ENCODE measurements at regions of chr7 and their contacts with region 1.

Region 1: GRCh38 chr7:73828107-73828803 is 2.5 kb upstream of the CLDN4 start:
- DNase-seq: peak; percentile 92 to 99
- H3K4me3 ChIP-seq: peak overlapping the region; percentile 58; the same call in 1 of the 2 replicates
- H3K27ac ChIP-seq: peak overlapping the region; percentile 99
- H3K4me1 ChIP-seq: peaks cover 69% of the 10 kb centered on the region
- H3K27me3 ChIP-seq: no peaks in the 10 kb centered on the region
- CTCF ChIP-seq: no peak

Region 2: GRCh38 chr7:73585196-73585595 is 243.1 kb before region 1 on chr7:
- CTCF ChIA-PET with region 1: no interaction called
- POLR2A ChIA-PET with region 1: no interaction called
- intact Hi-C with region 1: loop called (anchors 10 kb)
- DNase-seq: no peak
- H3K4me3 ChIP-seq: no peak overlapping the region
- H3K27ac ChIP-seq: no peak overlapping the region
- H3K4me1 ChIP-seq: peaks cover 22% of the 10 kb centered on the region
- H3K27me3 ChIP-seq: no peaks in the 10 kb centered on the region
- CTCF ChIP-seq: no peak

Region 3: DNA sequence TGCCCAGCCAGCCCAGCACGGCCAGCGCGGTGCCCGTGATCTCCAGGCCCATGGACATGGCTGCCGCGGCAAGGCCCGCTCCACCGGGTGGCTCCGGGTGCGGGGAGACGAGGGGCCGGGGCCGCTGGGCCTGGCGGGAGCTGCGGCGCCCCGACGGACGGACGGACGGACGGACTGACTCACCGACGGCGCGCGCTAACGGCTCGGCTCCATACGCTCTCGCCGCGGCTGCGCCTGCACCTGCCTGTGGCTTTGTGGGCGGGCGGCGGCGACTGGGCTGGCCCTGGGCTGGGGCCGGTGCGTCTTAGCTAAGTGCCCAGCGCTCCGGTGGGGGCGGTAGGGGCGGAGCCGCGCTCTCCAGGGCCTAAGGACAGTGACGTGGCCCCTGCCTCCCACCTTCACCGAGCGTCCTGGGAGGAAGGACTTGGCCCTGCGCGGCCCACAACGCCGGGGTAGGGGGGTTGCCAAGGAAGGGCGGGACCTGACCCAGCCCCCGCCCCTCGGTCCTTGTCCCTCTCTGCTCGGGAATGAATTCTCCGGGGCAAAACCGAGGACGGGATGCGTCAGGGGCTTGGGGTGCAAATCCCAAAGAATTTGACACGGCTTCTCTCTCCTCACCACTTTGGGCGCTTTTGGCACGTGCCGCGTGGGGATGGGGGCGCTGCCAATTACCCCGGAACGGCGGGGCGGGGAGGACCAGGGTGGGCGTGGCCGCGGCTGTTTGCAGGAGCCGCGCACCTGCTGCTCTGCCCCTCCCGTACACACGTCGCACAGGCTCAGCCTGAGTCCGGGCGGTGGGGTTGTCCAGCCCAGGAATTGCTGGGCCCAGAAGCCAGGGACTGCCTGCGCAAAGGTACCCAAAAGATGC is 58.0 kb before region 1 on chr7 and contains the start of gene CLDN3:
- CTCF ChIA-PET with region 1: no interaction called
- POLR2A ChIA-PET with region 1: interaction called, 15 read pairs
- intact Hi-C with region 1: loop called (anchors 1 kb)
- DNase-seq: peak; percentile 83 to 97
- H3K4me3 ChIP-seq: peak within 1 kb of the TSS; percentile 66; the same call in 1 of the 2 replicates
- H3K27ac ChIP-seq: peak within 1 kb of the TSS; percentile 58
- H3K4me1 ChIP-seq: peaks cover 23% of the 10 kb centered on the region
- H3K27me3 ChIP-seq: no peaks in the 10 kb centered on the region
- CTCF ChIP-seq: no peak
- total RNA-seq, gene CLDN3: 31.3 and 45.2 TPM in 2 replicates

Region 4: GRCh38 chr7:73811760-73812168 is 16.5 kb before region 1 on chr7:
- CTCF ChIA-PET with region 1: interaction called, 8 read pairs
- POLR2A ChIA-PET with region 1: interaction called, 20 read pairs
- intact Hi-C with region 1: loop called (anchors 1 kb)
- DNase-seq: peak; percentile 55 to 75
- H3K4me3 ChIP-seq: no peak overlapping the region
- H3K27ac ChIP-seq: no peak overlapping the region
- H3K4me1 ChIP-seq: peaks cover 22% of the 10 kb centered on the region
- H3K27me3 ChIP-seq: no peaks in the 10 kb centered on the region
- CTCF ChIP-seq: peak; percentile 89

Region 5: DNA sequence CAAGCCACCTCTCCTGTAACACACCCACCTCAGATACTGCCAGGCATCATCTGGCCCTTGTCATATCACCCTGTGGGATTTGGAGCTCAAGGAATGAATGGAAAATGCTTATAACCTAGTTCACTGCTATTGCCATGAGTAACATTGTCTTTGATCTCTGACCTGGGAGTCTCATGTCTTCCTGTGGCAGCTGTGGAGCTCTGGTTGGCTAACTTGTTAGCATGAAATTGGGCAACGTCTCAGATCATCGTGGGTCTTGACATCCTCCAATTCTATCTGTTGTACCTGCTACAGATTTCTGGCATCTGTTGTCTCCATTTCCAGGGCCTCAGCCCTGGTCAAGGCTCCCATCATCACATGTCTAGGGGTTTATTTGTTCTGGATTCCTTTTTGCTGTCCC is 30.6 kb after region 1 on chr7:
- CTCF ChIA-PET with region 1: interaction called, 4 read pairs
- POLR2A ChIA-PET with region 1: interaction called, 26 read pairs
- intact Hi-C with region 1: loop called (anchors 1 kb)
- DNase-seq: no peak
- H3K4me3 ChIP-seq: no peak overlapping the region
- H3K27ac ChIP-seq: no peak overlapping the region
- H3K4me1 ChIP-seq: peaks cover 12% of the 10 kb centered on the region
- H3K27me3 ChIP-seq: no peaks in the 10 kb centered on the region
- CTCF ChIP-seq: no peak

Region 6: GRCh38 chr7:74051193-74051592 is 222.9 kb after region 1 on chr7:
- CTCF ChIA-PET with region 1: no interaction called
- POLR2A ChIA-PET with region 1: no interaction called
- intact Hi-C with region 1: no loop called
- DNase-seq: no peak
- H3K4me3 ChIP-seq: no peak overlapping the region
- H3K27ac ChIP-seq: no peak overlapping the region
- H3K4me1 ChIP-seq: no peaks in the 10 kb centered on the region
- H3K27me3 ChIP-seq: peaks cover 18% of the 10 kb centered on the region
- CTCF ChIP-seq: no peak

Measured in PC-9 (cell line).